ENCODE measurements at regions of chr2 and their contacts with region 1.

Region 1: DNA sequence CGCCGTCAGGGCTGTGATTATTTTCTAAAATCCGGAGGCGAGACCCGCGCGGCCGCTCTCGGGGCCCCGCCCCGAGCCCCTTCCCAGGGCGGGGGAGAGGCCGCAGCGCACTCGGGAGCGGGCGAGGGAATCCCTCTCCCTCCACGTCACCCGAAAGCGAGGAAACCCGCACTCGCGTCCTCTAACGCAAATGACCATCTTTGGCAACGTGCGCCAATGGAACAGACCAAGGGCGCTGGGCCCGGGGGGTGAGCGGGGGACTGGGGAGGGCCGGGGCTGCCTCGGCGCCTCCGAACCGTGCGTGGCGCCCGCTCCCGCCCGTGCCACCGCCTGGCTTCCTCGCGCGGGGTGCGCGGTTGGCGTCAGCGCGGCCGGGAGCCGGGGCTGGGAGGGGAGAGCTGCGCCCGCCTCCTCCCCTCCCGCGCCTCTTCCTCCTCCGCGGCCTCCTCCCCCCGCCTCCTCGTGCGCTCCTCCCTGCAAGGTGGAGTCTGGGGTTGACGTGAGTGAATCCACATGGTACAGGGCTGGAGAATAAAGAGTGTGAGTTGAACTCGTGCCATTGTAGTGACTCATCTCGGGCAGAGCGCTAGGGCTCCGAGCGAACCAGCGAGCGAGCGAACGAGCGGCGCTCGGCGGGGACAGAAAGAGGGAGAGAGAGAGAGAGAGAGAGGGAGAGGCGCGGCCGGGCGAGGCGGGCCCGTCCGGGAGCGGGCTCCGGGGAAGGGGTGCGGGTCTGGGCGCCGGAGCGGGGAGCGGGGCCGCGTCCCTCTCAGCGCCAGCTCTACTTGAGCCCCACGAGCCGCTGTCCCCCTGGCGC is at the start of gene FOSL2:
- DNase-seq: peak; percentile 97
- ATAC-seq: peak; percentile 76
- total RNA-seq, gene FOSL2: 48.5 TPM

Region 2: DNA sequence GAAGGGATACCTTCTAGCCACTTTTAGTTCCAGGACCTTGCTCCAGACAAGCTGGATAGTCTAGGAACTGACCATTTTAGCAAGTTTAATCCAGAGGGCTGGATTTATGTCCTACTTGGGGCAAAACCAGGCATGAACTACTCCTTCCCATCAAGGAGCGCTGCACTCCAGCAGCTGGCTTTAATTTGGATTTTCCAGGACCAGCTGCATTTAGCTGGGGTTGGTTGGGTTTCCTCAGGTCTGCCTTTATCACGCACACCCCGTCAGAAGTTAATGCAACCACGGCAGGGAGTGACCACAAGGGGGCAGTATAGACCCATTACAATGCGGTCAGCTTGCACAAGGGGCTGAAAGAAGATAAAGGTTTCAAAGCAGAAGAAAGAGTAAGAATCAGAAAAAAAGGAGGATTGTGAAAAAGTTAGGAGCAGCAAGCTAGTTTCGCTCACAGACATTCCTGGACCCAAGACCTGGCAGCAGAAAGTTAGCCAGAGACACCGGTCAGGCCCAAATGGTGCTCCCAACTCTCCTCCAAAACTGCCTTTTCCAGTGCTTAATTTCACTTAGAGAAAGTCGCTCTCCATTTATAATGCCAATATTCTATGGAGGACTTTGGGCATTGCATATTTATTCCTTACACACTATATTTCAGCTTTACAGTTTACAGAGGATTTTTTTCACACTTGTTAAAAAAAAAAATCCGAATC is 688.7 kb before region 1 on chr2:
- intact Hi-C with region 1: loop called (anchors 5 kb)
- DNase-seq: no peak
- ATAC-seq: peak; percentile 63

Region 3: DNA sequence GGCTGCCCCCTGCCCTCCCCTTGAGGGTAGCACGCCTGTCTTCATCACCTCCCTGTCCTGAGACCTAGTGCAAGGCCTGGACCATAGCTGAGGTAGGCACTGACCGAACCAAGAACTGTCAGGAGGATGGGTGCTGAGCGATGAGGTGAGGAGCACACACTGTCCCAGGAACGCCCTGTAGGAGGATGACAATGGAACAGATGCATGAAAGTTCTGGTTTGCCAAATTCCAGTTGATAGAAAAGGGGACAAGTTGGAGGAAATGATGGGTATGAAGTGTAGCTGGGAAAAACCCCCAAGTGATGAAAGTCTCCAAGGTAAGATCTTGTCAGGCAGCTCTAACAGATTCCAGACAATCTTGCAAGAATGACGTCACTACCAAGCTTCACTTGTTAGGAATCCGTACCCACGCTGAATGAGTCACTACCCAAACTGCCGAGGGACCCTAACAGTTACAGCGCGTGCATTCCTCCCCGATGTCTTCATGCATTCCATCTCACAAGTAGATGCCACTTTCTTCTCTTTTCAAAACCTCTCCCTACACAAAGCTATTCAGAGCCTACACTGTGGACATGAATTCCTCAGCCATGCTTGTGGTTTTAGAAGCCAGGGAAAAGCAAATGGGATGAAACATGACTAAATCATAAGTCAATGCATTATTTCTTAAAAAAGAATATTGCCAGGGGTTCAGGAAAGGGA is 593.4 kb before region 1 on chr2:
- intact Hi-C with region 1: loop called (anchors 1 kb)
- DNase-seq: no peak
- ATAC-seq: peak; percentile 15

Region 4: GRCh38 chr2:27884546-27884945 is 508.0 kb before region 1 on chr2:
- intact Hi-C with region 1: no loop called
- DNase-seq: no peak
- ATAC-seq: no peak

Region 5: DNA sequence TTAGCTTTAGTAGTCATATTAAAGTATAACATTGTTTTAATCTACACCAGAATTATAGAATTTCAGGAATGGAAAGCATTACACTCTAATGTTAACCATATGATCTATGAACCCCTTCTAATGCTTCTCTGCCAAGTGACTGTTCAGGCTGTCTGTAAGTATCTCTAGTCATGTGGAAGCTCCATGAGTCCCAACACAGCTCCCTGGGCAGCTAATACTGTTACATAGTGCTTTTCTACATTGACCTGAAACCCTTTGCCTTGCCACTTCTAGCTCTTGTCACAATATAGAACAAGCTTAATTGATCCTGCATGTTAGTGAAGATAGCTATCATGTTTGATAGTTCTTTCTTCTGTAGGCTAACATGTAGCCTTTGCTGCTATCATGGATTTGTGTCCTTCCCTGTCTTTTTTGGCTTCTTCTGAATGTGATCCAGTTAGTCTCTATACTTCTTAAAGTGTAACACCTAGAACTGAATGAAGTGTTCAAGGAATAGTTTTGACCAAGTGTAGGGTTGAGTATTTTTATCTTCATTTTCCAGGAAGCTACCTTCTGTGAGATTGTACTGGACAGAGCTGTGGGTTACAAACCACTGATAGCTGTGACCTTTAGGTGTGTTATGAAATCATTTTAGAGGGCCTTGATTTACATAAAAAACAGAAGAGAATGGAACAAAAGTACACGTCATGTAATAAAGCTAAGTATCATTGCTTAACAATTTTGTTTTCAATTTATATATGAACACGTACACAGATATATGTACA is 478.3 kb before region 1 on chr2:
- intact Hi-C with region 1: loop called (anchors 5 kb)
- DNase-seq: no peak
- ATAC-seq: peak; percentile 47

Region 6: GRCh38 chr2:28004086-28004485 is 388.4 kb before region 1 on chr2:
- intact Hi-C with region 1: no loop called
- DNase-seq: no peak
- ATAC-seq: no peak

Region 7: DNA sequence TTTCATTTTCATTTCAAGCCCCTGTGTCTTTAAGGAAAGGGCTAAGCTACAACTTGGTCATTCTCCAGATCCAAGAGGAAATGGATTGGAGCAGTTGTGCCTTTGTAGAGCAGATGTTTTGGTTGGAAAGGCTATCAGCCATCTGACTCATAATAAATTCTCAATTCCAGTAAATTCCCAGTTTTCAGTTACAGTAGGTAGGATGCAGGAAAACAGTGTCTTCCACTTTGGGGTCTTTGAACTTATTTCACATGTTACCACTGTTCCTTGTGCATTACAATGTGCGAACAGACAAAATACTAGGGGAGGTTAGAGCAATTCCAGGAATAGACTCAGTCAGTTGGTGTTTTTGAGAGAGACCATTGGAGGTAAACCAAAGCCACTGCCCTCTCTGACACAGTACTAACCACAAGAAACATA is 290.0 kb before region 1 on chr2:
- intact Hi-C with region 1: loop called (anchors 2 kb)
- DNase-seq: no peak
- ATAC-seq: peak; percentile 84

Region 8: GRCh38 chr2:28233164-28233676 is 159.3 kb before region 1 on chr2:
- intact Hi-C with region 1: loop called (anchors 10 kb)
- DNase-seq: no peak
- ATAC-seq: no peak

Region 9: DNA sequence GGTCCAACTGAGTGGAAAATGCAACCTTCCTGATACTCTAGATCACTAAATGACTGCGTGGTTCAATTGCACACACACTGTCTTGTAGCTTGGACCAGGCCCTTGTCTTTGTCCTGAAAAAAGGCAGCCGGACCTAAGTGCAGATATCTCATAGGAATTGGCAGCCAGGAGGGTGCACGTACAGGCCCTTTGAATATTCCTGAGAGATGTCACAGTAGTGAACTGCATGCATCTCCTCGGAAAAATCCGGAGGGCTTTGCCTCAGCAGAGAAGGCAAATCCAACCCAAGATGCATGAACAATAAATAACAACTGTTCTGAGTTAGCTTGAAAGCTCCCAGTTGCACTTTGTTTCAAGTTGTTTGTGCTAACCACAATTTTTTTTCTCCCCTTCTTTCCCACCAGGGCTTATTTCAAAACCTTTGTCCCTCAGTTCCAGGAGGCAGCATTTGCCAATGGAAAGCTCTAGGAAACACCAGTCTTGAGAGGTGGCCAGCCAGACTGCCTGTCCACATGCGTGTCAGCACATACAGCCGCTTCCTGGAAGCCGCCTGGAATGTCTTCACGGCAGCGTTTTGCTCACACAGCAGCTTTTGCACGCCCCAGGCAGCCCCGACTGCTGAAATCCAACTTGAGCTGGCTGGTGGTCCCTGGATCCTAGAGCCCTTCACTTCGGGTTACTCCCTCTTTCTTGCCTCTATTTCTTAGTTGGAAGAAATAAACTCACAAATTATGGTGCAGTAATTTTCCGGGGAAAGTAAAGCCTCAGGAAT is 54.3 kb before region 1 on chr2:
- intact Hi-C with region 1: loop called (anchors 1 kb)
- DNase-seq: peak; percentile 89
- ATAC-seq: peak; percentile 70

Region 10: GRCh38 chr2:28366496-28367282 is 25.8 kb before region 1 on chr2:
- intact Hi-C with region 1: no loop called
- DNase-seq: no peak
- ATAC-seq: no peak

Region 11: GRCh38 chr2:28469304-28469703 is 76.8 kb after region 1 on chr2:
- intact Hi-C with region 1: no loop called
- DNase-seq: no peak
- ATAC-seq: no peak

Measured in Right ventricle myocardium inferior (tissue), 1 donor.